Panc1 (cell line): ENCODE measurements at regions of chr4 and their contacts with region 1.

Region 1: DNA sequence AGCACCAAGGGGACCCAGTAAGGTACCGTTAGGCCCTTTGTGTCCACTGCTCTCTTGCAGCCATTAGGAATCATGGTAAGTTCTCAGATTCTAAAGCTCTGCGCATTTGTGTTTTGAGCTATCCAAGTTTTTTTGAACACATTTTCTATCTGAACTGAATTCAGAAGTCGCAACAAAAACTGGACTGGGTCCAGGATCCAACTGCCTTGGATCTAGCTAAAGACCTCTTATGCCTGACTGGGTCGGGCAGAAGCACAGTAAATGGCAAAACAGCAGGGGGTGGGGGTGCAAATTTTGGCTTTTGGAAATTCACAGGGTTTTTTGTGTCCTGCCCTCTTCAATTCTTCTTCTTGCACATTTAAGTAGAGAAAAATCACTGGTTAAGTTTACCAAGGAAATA is 30.0 kb downstream of the RCHY1 start:
- DNase-seq: no peak
- ATAC-seq: no peak
- H3K4me3 ChIP-seq: no peak overlapping the region
- H3K27ac ChIP-seq: no peak overlapping the region
- H3K4me1 ChIP-seq: no peaks in the 10 kb centered on the region
- H3K27me3 ChIP-seq: no peaks in the 10 kb centered on the region
- CTCF ChIP-seq: no peak

Region 2: GRCh38 chr4:74189331-74190043 is 1294.7 kb before region 1 on chr4:
- CTCF ChIA-PET with region 1: interaction called, 14 read pairs
- POLR2A ChIA-PET with region 1: no interaction called
- in situ Hi-C with region 1: no loop called
- intact Hi-C with region 1: no loop called
- DNase-seq: peak; percentile 41
- ATAC-seq: no peak
- H3K4me3 ChIP-seq: no peak overlapping the region
- H3K27ac ChIP-seq: no peak overlapping the region
- H3K4me1 ChIP-seq: no peaks in the 10 kb centered on the region
- H3K27me3 ChIP-seq: no peaks in the 10 kb centered on the region
- CTCF ChIP-seq: peak; percentile 70; the same call in 1 of the 2 replicates

Region 3: GRCh38 chr4:75752637-75753036 is 268.4 kb after region 1 on chr4:
- CTCF ChIA-PET with region 1: no interaction called
- POLR2A ChIA-PET with region 1: no interaction called
- in situ Hi-C with region 1: no loop called
- intact Hi-C with region 1: no loop called
- DNase-seq: no peak
- ATAC-seq: no peak
- H3K4me3 ChIP-seq: no peak overlapping the region
- H3K27ac ChIP-seq: no peak overlapping the region
- H3K4me1 ChIP-seq: no peaks in the 10 kb centered on the region
- H3K27me3 ChIP-seq: no peaks in the 10 kb centered on the region
- CTCF ChIP-seq: no peak